ENCODE measurements at regions of chr19 and their contacts with region 1.

Region 1: DNA sequence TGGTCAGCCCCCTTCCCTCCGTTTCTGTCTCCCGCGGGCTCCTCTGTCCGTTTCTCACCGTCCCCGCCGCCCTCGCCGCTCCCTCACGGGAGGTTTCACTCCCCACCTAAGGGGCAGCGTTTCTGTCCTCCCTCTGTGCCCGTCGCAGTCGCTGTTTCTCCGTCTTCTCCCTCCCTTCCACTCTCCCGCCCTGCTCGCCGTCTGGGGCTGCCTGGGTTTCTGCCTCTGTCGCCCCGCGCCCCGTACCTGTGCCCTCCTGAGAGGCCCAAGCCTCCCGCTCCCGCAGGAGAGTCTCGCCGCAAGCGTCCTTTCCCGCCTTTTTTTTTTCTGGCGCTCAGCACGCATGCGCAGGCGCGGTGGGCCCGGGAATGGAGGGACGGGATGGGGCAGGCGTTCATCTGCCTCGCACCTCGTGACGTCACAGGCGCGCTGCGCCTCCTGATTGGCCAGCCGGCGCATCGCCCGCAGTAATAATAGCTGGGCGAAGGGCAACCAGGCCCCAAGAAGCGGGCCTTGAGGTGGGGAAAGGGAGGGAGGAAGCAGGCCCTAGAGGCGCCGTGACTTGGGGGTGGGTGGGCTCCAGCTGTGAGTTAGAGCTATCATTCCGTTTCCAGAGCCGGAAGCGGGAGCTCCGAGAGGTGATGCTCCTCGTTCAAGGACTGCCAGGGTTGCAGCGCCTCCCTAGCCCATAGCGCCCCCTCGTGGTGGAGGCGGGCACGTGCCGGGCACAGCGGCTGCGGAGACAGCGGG is 15.4 kb downstream of the SSC5D start:
- DNase-seq: peak; percentile 86 to 98 (median 93)
- ATAC-seq: peak; percentile 94
- H3K4me3 ChIP-seq: peak overlapping the region; percentile 57 to 66
- H3K4me3 Mint-ChIP-seq: peak overlapping the region; percentile 77
- H3K27ac ChIP-seq: peak overlapping the region; percentile 49 to 75
- H3K27ac Mint-ChIP-seq: peak overlapping the region; percentile 80
- H3K4me1 ChIP-seq: peaks cover 4% of the 10 kb centered on the region
- H3K4me1 Mint-ChIP-seq: peaks cover 12% of the 10 kb centered on the region
- H3K27me3 ChIP-seq: peaks cover 0 to 2% of the 10 kb centered on the region in 2 experiments
- H3K27me3 Mint-ChIP-seq: peaks cover 2% of the 10 kb centered on the region
- CTCF ChIP-seq: peak; percentile 99

Region 2: GRCh38 chr19:54481322-54481930 is 1022.3 kb before region 1 on chr19:
- CTCF ChIA-PET with region 1: no interaction called
- POLR2A ChIA-PET with region 1: no interaction called
- intact Hi-C with region 1: loop called in 1 of 2 experiments (anchors 5 kb)
- DNase-seq: peak in 7 of 9 experiments; percentile 25 to 79 (median 40)
- ATAC-seq: peak; percentile 63
- H3K4me3 ChIP-seq: no peak overlapping the region
- H3K4me3 Mint-ChIP-seq: no peak overlapping the region
- H3K27ac ChIP-seq: no peak overlapping the region
- H3K27ac Mint-ChIP-seq: no peak overlapping the region
- H3K4me1 ChIP-seq: peaks cover 3% of the 10 kb centered on the region
- H3K4me1 Mint-ChIP-seq: peaks cover 7% of the 10 kb centered on the region
- H3K27me3 ChIP-seq: peaks cover 0 to 8% of the 10 kb centered on the region in 2 experiments
- H3K27me3 Mint-ChIP-seq: peaks cover 42% of the 10 kb centered on the region
- CTCF ChIP-seq: peak; percentile 89

Region 3: DNA sequence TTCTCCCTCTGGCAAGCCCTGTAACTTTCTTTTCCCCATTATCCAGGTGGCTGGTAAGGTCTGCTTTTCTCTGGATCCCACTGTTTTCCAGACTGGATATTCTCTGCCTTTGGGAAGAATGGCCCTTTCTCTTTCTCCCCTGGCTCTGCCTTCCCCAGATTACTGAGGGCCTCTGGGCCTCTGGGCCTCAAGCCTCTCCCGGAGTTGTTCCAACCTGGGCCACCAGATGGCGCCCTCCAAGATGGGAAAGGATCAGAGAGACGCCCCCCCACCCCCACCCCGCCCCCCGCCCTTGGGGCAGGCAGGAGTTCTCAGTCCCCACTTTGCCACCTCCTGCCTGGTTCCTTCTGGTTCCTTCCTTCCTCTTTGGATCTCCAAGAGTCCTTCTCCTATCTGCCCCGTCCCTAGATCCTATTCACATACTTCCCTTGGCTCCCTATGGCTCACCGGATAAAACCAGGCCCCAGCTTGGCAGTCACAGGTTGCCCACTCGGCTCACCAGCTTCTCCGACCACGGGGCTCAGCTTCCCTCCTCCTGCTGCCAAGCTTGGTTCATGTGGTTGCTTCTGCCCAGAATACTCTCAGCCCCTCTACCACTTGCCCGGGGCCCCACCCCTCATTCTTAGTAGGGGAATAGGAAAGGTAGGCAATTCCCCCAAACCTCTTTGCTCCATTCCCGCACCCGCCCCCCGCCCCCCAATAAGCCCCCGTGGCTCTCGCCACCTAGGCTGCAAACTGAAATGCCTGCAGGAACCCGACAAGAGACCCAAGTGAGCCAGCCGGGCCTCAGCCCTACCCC is 414.9 kb before region 1 on chr19:
- CTCF ChIA-PET with region 1: interaction called, 8 read pairs
- POLR2A ChIA-PET with region 1: no interaction called
- intact Hi-C with region 1: loop called in 1 of 2 experiments (anchors 1 kb)
- DNase-seq: peak; percentile 50 to 85 (median 77)
- ATAC-seq: peak; percentile 64
- H3K4me3 ChIP-seq: no peak overlapping the region
- H3K4me3 Mint-ChIP-seq: peak overlapping the region; percentile 58
- H3K27ac ChIP-seq: no peak overlapping the region
- H3K27ac Mint-ChIP-seq: no peak overlapping the region
- H3K4me1 ChIP-seq: peaks cover 18% of the 10 kb centered on the region
- H3K4me1 Mint-ChIP-seq: peaks cover 16% of the 10 kb centered on the region
- H3K27me3 ChIP-seq: peaks cover 13 to 18% of the 10 kb centered on the region in 2 experiments
- H3K27me3 Mint-ChIP-seq: peaks cover 44% of the 10 kb centered on the region
- CTCF ChIP-seq: peak; percentile 83

Region 4: GRCh38 chr19:55227241-55228014 is 276.2 kb before region 1 on chr19:
- CTCF ChIA-PET with region 1: no interaction called
- POLR2A ChIA-PET with region 1: no interaction called
- intact Hi-C with region 1: no loop called
- DNase-seq: no peak
- ATAC-seq: no peak
- H3K4me3 ChIP-seq: no peak overlapping the region
- H3K4me3 Mint-ChIP-seq: no peak overlapping the region
- H3K27ac ChIP-seq: no peak overlapping the region
- H3K27ac Mint-ChIP-seq: no peak overlapping the region
- H3K4me1 ChIP-seq: no peaks in the 10 kb centered on the region
- H3K4me1 Mint-ChIP-seq: peaks cover 5% of the 10 kb centered on the region
- H3K27me3 ChIP-seq: no peaks in the 10 kb centered on the region
- H3K27me3 Mint-ChIP-seq: no peaks in the 10 kb centered on the region
- CTCF ChIP-seq: no peak

Region 5: GRCh38 chr19:55289117-55289796 is 214.4 kb before region 1 on chr19:
- CTCF ChIA-PET with region 1: interaction called, 5 read pairs
- POLR2A ChIA-PET with region 1: no interaction called
- intact Hi-C with region 1: loop called in 1 of 2 experiments (anchors 1 kb)
- DNase-seq: no peak
- ATAC-seq: no peak
- H3K4me3 ChIP-seq: no peak overlapping the region
- H3K4me3 Mint-ChIP-seq: no peak overlapping the region
- H3K27ac ChIP-seq: no peak overlapping the region
- H3K27ac Mint-ChIP-seq: no peak overlapping the region
- H3K4me1 ChIP-seq: peaks cover 4% of the 10 kb centered on the region
- H3K4me1 Mint-ChIP-seq: peaks cover 6% of the 10 kb centered on the region
- H3K27me3 ChIP-seq: no peaks in the 10 kb centered on the region
- H3K27me3 Mint-ChIP-seq: no peaks in the 10 kb centered on the region
- CTCF ChIP-seq: no peak

Region 6: DNA sequence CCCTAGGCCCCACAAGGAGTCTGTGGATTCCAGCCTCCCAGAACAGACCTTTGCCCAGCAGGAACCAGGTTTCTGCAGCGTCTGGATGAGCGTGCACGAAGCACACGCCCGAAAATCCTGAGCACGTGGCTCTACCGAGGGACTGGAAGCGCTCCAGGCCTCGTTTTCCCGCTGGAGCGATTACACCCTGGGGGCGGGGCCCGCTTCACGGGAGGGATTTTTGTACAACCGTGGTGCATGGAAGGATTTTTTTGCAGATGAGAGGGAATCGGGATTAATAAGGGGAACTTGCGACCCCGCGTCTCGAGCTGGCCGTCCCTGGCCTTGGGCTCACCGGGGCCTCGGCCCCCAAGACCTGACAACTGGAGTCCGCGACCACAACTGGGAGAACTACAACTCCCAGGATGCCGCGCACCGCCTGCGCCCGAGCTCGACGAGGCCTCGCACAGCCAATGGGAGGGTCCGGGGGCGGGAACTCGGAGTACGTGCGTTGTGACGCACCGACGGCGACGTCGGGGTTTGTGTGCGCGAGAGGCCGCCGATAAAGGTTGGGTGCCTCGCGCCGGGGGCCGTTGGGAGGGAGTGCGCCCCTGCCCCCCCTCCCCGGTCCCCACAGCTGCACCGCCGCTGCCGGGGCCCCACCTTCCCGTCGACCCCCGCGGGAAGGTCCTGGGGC is 27.4 kb before region 1 on chr19 and contains the start of gene ZNF628:
- CTCF ChIA-PET with region 1: interaction called, 19 read pairs
- POLR2A ChIA-PET with region 1: interaction called, 6 read pairs
- intact Hi-C with region 1: loop called in 1 of 2 experiments (anchors 2 kb)
- DNase-seq: peak; percentile 95 to 99 (median 98)
- ATAC-seq: peak; percentile 93
- H3K4me3 ChIP-seq: peak within 1 kb of the TSS; percentile 70 to 72
- H3K4me3 Mint-ChIP-seq: peak within 1 kb of the TSS; percentile 85
- H3K27ac ChIP-seq: peak within 1 kb of the TSS; percentile 58 to 91
- H3K27ac Mint-ChIP-seq: peak within 1 kb of the TSS; percentile 88
- H3K4me1 ChIP-seq: peaks cover 17% of the 10 kb centered on the region
- H3K4me1 Mint-ChIP-seq: peaks cover 34% of the 10 kb centered on the region
- H3K27me3 ChIP-seq: no peaks in the 10 kb centered on the region
- H3K27me3 Mint-ChIP-seq: no peaks in the 10 kb centered on the region
- CTCF ChIP-seq: no peak
- total RNA-seq, gene ZNF628: 27.0 to 27.8 TPM

Region 7: GRCh38 chr19:55605207-55605636 is 101.5 kb after region 1 on chr19:
- CTCF ChIA-PET with region 1: interaction called, 13 read pairs
- POLR2A ChIA-PET with region 1: no interaction called
- intact Hi-C with region 1: no loop called
- DNase-seq: peak; percentile 90 to 99 (median 98)
- ATAC-seq: peak; percentile 78
- H3K4me3 ChIP-seq: peak overlapping the region; percentile 60 to 80
- H3K4me3 Mint-ChIP-seq: peak overlapping the region; percentile 86
- H3K27ac ChIP-seq: peak overlapping the region; percentile 60 to 91
- H3K27ac Mint-ChIP-seq: peak overlapping the region; percentile 90
- H3K4me1 ChIP-seq: peaks cover 24% of the 10 kb centered on the region
- H3K4me1 Mint-ChIP-seq: peaks cover 60% of the 10 kb centered on the region
- H3K27me3 ChIP-seq: no peaks in the 10 kb centered on the region
- H3K27me3 Mint-ChIP-seq: no peaks in the 10 kb centered on the region
- CTCF ChIP-seq: no peak